Right ventricle myocardium superior (tissue), 1 donor: ENCODE measurements at regions of chr6 and their contacts with region 1.

Region 1: GRCh38 chr6:13795041-13795750 is 19.2 kb downstream of the MCUR1 start:
- DNase-seq: peak; percentile 87
- ATAC-seq: peak; percentile 88

Region 2: GRCh38 chr6:12661432-12662089 is 1133.6 kb before region 1 on chr6:
- intact Hi-C with region 1: no loop called
- DNase-seq: no peak
- ATAC-seq: no peak

Region 3: GRCh38 chr6:13500264-13500663 is 294.9 kb before region 1 on chr6:
- intact Hi-C with region 1: no loop called
- DNase-seq: no peak
- ATAC-seq: no peak

Region 4: DNA sequence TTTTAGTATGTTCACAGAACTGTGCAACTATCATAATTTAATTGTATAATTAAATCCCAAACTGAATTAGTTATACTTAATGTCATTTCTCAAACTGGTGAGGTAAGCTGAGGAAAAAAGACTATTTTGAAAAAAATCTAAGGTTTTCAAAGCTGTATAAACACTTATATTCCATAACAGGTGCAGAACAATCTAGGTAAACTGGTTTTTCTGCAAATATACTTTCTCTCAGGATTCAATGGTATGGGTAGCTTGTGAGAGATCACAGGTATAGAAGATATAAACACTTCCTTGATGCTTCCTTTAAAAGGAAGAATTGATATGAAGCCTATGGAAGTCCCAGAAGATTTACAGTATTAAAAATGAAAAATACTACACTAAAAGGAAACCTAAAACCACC is 146.3 kb before region 1 on chr6:
- intact Hi-C with region 1: no loop called
- DNase-seq: no peak
- ATAC-seq: no peak

Region 5: DNA sequence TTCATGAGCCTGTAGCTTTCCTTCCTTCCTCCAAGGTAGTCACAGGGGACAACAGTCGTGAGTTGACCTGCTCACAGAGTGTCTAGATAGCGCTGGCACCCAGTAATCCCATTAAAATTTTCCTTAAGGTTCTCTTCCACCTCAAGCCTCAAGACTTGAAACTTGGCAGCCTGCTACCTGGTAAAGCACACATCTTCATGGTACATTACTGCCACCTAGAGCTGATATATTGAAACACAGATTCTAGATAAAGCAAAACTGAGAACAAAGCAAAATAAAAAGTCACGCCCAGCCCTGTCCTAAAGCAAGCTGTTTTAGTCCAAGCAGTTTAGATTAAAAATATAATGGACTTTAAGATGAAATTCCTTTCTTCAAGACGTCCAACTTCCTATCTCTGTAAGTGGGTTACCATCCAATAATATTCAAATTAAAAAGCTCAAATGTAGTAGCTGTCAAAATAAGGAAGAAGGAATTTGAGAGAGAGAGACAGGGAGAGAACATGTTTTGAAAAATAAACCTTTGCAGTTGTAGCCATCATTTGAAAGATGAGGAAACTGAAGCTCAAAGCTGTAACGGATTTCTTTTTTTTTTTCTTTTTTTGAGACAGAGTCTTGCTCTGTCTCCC is 271.7 kb after region 1 on chr6:
- intact Hi-C with region 1: loop called (anchors 10 kb)
- DNase-seq: no peak
- ATAC-seq: peak; percentile 79